Activated CD4-positive, alpha-beta T cell treated with anti-CD3 and anti-CD28 coated beads for 36 hours (primary cell): ENCODE measurements at regions of chr2 and their contacts with region 1.

Region 1: DNA sequence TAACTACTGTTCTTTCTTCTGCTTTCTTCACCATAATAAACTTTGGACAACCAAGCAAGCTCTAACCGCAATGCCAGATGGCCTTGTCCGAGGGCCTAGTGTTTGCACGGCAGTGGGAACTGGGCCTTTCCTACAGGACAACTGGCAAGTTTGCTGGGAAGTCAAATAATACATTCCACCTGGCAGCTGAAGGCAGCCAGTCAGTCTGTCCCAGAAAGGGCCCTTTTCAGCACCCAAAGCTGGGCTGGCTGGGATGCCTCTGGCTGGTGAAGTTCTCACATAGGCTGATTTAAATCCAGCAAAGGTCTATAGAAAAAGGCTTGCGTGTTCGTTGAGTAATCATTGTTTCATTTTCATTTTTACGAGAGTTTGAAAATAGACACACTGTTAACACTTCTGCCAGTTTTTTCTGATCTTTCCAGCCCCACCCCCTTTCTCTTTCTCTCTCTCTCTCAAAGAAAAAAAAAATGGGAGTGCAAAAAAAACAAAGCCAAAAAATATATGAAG is 110.0 kb upstream of the EPAS1 start:
- DNase-seq: peak; percentile 65
- ATAC-seq: peak; percentile 99
- H3K4me3 Mint-ChIP-seq: no peak overlapping the region
- H3K27ac Mint-ChIP-seq: peak overlapping the region; percentile 85
- H3K4me1 Mint-ChIP-seq: peaks cover 13% of the 10 kb centered on the region
- H3K27me3 Mint-ChIP-seq: no peaks in the 10 kb centered on the region

Region 2: DNA sequence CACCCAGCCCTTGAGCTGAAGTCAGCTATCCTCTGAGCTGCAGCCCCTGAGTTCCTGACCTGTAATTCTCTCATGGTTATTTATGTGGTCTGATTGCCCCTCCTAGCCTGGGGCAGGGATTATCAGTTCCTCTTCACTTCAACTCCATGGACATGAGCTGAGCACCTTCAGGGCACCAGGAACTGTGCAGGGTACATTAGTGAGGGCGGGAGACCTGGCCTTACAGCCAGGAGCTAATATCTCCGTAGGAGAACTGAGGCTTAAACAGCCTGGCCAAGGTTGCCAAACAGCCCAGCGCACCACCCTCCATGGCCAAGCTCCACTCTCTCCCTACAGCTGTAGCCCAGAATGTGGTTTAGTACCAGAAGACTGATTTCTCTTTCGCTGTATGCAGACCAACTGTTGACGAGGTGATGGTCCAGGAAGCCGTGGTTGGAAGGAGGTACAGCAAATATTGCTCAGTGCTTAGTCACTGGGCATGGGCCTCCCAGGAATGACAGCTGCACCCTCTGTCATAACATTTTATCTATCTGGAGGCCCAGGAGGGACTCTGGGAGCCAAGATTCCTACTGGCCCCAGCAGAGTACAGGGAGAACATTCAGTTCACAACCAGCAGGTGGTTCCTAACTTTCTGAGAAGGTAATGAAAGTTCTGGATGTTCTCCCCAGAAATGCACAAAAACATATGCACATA is 949.2 kb before region 1 on chr2:
- CTCF ChIA-PET with region 1: no interaction called
- POLR2A ChIA-PET with region 1: no interaction called
- intact Hi-C with region 1: no loop called
- DNase-seq: peak; percentile 45
- ATAC-seq: peak; percentile 88
- H3K4me3 Mint-ChIP-seq: no peak overlapping the region
- H3K27ac Mint-ChIP-seq: no peak overlapping the region
- H3K4me1 Mint-ChIP-seq: peaks cover 8% of the 10 kb centered on the region
- H3K27me3 Mint-ChIP-seq: peaks cover 21% of the 10 kb centered on the region

Region 3: GRCh38 chr2:46173636-46174250 is 13.4 kb before region 1 on chr2:
- CTCF ChIA-PET with region 1: interaction called, 3 read pairs
- POLR2A ChIA-PET with region 1: no interaction called
- intact Hi-C with region 1: loop called in 1 of 2 experiments (anchors 1 kb)
- DNase-seq: no peak
- ATAC-seq: no peak
- H3K4me3 Mint-ChIP-seq: no peak overlapping the region
- H3K27ac Mint-ChIP-seq: no peak overlapping the region
- H3K4me1 Mint-ChIP-seq: peaks cover 5% of the 10 kb centered on the region
- H3K27me3 Mint-ChIP-seq: no peaks in the 10 kb centered on the region

Region 4: GRCh38 chr2:46751897-46752296 is 564.7 kb after region 1 on chr2:
- CTCF ChIA-PET with region 1: no interaction called
- POLR2A ChIA-PET with region 1: no interaction called
- intact Hi-C with region 1: no loop called
- DNase-seq: no peak
- ATAC-seq: no peak
- H3K4me3 Mint-ChIP-seq: no peak overlapping the region
- H3K27ac Mint-ChIP-seq: no peak overlapping the region
- H3K4me1 Mint-ChIP-seq: peaks cover 27% of the 10 kb centered on the region
- H3K27me3 Mint-ChIP-seq: no peaks in the 10 kb centered on the region